GM10248 (cell line): ENCODE measurements at regions of chr3 and their contacts with region 1.

Region 1: DNA sequence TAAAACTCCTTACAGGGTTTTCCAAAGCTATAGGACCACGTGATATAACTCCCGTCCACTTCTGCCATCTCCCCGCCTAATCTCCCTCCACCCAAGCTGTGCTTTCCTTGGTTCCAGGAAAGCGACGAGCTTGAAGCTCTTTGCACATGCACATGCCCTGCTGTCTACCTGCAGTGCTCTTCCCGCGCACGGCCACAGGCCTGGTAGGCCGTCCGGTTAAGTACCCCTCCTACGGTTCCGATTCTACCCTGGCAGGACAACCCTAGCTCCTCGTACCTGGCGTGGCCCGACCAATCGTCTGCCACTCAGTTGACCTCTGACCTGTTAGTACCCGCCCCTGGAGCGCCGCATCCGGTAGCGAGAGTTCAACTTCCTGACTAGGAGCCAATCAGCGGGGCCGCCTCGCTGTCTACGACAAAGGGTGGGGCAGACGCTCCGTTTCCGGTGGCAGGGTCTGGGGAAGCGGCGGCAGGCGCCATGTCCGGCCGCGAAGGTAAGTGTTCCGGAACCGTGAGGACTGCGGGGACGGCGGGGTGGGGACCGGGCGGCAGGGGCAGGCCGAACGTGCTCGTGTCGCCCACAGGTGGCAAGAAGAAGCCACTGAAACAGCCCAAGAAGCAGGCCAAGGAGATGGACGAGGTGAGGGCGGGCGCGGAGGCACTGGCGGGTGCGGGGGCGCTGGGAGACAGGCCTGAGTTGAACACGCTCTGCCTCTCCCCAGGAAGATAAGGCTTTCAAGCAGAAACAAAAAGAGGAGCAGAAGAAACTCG is at the starts of genes CCDC51 and TMA7:
- DNase-seq: peak; percentile 99
- CTCF ChIP-seq: no peak

Region 2: GRCh38 chr3:48039487-48040190 is 400.4 kb before region 1 on chr3:
- CTCF ChIA-PET with region 1: no interaction called
- POLR2A ChIA-PET with region 1: no interaction called
- DNase-seq: no peak
- CTCF ChIP-seq: no peak

Region 3: GRCh38 chr3:48199956-48200355 is 240.0 kb before region 1 on chr3:
- CTCF ChIA-PET with region 1: interaction called, 52 read pairs
- POLR2A ChIA-PET with region 1: no interaction called
- DNase-seq: no peak
- CTCF ChIP-seq: no peak

Region 4: DNA sequence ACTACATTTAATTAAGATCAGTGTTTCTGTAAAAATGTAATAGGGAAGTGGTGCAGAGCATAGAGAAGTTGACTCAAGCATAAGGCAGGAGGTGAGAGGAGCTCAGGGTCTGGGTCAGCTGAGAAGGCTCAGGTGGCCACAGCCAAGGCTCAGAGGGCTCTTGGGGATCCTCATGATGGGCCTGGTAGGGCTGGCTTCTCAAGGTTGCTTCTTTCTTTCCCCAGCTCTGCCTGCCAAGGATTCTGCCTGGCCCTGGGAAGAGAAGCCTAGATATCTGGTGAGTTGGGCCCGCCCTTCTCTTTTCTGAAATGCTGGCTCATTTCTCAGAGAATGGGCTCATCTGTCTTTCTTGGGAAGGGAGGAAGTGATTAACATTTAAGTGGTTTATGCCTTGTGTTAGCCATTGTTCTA is 192.6 kb before region 1 on chr3:
- CTCF ChIA-PET with region 1: interaction called, 27 read pairs
- POLR2A ChIA-PET with region 1: no interaction called
- DNase-seq: no peak
- CTCF ChIP-seq: no peak

Region 5: DNA sequence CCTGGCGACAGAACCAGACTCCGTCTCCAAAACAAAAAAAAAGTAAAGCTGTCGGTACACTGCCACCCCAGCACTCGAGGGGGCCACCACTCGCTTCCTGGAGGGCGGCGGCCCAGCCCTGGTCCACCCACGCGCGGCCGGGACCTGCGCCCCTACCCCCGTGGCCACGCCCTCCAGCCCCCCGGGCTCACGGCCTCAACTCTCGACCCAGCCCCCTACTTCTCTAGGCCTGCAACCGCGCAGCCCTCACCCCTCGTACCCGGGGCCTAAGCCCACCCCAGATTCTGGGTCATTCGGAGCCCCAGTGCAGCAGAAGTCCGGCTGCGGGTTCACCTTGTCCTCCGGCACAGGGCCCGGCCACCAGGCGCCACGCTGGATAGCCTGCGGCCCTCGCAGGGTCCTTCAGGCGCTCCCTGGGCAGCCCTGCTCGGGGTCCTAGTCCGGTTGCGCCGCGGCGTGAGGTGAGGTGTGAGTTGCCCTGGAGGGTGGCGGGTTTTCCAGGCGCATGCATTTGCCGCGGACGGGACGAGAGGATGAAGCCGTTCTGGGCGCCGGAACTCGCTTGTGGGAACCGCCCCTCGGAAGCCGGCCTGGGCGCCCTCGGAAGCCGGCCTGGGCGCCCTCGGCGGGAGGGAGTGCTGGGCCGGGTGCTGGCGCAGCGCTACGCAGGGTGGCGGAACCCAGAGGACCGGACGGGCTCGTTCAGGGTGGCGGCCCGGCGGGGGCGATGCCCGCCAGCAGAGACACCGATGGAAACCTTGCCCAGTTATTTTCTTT is 138.8 kb before region 1 on chr3:
- CTCF ChIA-PET with region 1: interaction called, 20 read pairs
- POLR2A ChIA-PET with region 1: no interaction called
- DNase-seq: peak; percentile 92
- CTCF ChIP-seq: no peak

Region 6: DNA sequence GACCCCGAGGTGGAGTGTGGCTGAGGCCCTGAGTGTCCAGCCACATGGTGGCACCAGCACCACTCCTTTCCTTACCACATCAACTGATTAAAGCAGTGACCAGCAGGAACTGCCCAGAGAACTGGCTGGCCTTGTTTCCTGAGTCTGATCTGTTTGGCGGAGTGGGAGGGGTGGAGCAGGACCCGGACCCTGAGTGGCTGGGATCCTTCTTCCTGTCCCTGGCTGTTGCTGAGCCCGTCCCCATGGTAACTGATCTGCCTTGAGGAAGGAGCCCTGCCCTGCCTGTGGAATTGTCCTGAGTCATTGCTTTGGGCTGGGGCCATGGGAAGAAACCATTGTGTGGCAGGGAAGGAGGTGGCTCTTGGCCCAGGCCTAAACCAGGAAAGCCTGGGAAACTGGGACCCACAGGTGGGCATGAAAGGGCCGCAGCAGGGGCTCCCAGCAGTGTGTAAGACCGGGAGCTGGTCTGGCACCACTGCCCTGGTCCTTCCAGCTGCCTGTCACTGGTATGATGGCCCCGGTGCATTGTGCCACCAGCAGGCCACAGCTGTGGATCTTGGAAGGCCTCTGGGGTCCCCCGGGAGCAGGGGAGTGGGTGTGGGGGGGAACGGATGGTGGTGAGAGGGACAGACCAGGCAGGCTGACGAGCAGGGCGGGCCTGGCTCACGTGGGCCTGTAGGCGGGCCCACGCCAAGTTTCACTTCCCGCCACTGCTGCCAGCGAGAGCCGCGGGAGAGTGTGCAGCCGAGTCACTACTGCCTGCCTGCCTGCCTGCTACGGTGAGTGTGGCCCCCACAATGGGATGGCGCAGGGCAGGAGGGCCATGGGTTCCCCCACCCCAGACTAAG is 25.8 kb after region 1 on chr3:
- CTCF ChIA-PET with region 1: interaction called, 37 read pairs
- POLR2A ChIA-PET with region 1: no interaction called
- DNase-seq: peak; percentile 92
- CTCF ChIP-seq: peak; percentile 53

Region 7: GRCh38 chr3:48548729-48549705 is 109.0 kb after region 1 on chr3:
- CTCF ChIA-PET with region 1: interaction called, 29 read pairs
- POLR2A ChIA-PET with region 1: no interaction called
- DNase-seq: peak; percentile 79
- CTCF ChIP-seq: peak; percentile 83

Region 8: DNA sequence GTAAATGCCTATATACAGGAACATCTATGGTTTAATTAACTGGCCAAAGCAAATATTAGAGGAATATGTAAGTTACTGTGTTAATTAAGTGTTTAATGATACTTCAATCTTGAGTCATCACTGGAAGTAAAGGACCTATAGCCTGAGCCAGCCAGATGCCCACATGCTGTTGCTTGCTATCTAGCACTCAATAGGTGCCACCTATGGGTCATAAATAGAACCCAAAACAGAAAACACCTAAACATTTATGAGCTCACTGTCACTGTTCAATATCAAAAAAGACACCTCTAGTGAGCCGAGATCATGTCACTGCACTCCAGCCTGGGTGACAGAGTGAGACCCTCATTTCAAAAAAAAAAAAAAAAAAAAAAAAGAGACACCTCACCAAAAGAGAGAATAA is 325.4 kb after region 1 on chr3:
- CTCF ChIA-PET with region 1: no interaction called
- POLR2A ChIA-PET with region 1: no interaction called
- DNase-seq: no peak
- CTCF ChIP-seq: peak; percentile 12